ENCODE measurements at regions of chr7 and their contacts with region 1.

Region 1: GRCh38 chr7:23700059-23700458 is 10.0 kb upstream of the STK31 start:
- DNase-seq: no peak
- CTCF ChIP-seq: no peak

Region 2: DNA sequence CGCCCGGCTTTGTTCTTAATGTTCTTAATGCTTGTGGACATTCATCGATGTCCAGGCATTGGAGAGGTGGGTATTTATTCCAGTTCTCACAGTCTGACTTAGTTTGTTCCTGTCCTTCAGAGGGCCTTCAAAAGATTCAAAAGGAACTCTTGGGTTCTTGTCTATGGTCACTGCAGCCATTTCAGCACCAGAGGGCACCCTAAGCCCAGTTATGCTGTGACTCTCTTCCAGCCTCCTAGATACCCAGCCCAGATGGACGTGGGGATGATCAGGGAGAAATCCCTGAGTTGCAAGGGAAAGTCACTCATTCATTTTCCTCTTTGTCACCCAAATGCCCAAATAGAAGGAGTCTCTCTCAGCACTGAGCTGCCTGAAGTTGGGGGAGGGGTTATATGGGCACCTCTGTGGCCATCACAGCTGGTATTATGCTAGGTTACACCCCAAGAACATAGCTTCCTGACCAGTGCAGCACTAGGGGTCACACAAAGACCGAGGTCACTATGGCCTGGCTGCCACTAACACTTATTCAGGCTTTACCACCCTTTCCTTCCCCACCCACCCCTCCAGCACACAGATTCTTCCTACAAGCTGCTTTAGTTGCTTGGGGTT is 129.4 kb before region 1 on chr7:
- in situ Hi-C with region 1: loop called (anchors 10 kb)
- DNase-seq: peak; percentile 80
- CTCF ChIP-seq: peak; percentile 67